Activated naive CD4-positive, alpha-beta T cell treated with anti-CD3 and anti-CD28 coated beads, Interleukin-2, amount 10 ng/mL, durations not matched to agents 7 days and 5 days (primary cell): ENCODE measurements at regions of chr3 and their contacts with region 1.

Region 1: DNA sequence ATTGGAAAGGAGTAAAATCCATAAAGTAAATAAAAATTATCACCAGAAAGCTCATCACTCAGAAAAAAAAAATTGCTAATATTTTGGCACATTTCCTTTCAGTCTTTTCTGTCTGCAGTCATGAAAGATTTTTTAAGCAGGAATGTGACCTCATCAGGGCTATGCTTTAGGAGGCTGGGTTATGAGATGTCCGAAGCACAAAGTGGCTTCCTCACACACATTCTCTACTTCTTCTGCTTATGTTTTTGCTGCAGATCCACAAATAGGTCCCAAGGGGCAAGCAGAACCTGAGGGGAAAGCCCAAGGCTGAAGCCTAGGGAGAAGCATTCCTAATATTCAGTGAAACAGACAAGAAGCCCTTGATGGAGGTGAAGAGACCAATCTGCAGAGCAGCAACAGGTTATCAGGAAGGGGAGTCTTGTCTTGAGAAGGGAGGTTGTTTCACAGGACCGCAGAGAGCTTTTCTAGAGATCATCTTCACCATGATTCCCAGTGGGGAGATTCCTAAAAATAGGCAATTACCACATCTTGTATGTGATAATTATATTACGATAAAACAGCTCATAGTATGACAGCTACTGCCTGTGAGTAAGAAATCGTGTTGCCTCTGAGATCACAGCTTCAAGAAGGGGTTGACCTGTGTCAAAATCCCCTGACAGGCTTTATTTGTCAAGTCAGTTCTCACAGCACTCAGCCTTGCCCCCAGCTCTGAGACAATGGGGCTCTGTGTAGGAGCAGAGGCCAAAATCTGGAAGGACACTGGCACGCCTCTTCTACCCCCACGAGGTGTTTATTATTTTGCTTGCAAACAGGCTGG is 60.5 kb downstream of the IGF2BP2 start:
- DNase-seq: no peak
- H3K4me3 Mint-ChIP-seq: no peak overlapping the region
- H3K27ac Mint-ChIP-seq: no peak overlapping the region
- H3K4me1 Mint-ChIP-seq: peaks cover 3% of the 10 kb centered on the region
- H3K27me3 Mint-ChIP-seq: peaks cover 61% of the 10 kb centered on the region

Region 2: DNA sequence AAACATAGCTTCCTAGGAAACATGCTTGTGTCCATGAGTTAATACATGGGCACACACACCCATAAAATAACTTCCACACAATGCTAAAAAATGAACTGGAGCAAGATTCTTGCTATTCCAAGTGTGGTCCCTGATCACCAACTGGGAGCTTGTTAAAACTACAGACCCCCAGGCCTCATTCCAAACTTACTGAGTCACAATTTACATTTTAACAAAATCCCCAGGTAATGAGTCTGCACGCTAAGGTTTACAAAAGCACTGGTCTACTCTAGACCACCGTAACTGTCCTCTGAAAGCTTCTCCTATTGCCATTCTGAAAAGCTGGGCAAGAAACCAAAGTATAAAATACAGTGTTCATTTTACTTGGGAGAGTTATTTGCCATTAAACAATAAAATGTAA is 15.1 kb after region 1 on chr3:
- CTCF ChIA-PET with region 1: interaction called, 14 read pairs
- DNase-seq: no peak
- H3K4me3 Mint-ChIP-seq: no peak overlapping the region
- H3K27ac Mint-ChIP-seq: no peak overlapping the region
- H3K4me1 Mint-ChIP-seq: no peaks in the 10 kb centered on the region
- H3K27me3 Mint-ChIP-seq: peaks cover 14% of the 10 kb centered on the region